Activated CD4-positive, alpha-beta memory T cell treated with anti-CD3 and anti-CD28 coated beads, Interleukin-2, amount 10 ng/mL, durations not matched to agents 7 days and 5 days (primary cell): ENCODE measurements at regions of chr15 and their contacts with region 1.

Region 1: DNA sequence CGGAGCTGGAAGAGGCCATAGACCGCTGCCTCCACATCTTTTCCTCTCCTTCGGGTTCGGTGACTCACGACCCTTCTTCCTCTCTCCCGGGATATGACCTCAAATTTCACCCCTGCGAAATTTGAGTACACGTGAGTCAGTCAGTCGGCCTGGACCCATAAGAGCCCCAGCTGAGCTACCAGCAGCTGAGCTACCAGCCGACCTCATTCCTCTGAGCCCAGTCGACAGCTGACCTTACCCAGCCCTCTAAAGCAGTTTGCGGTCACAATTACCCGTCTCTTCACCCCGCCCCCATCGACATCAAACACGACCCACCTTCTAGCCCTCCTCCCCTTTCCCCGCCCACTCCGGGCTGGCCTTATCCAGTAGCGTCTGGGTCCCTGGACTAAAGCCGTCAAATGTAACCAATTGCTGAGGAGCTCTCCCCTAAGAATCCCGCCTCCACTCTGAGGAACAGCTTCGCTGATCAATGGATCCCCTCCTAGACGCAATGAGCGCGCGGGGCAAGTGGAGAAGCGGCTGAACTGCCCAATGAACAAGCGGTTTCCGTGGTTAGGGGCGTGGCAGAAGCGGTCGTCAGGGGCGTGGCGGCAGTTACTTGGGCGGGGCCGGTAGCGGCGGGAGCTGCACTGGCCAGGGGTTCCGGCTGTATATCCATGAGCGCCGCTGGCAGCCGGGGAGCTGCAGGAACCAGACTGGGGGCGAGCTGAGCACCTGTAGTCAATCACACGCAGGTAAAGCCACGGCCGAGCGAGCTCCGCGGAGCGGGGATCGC is at the start of gene ABHD2:
- DNase-seq: peak; percentile 99
- H3K4me3 Mint-ChIP-seq: no peak within 1 kb of the TSS
- H3K27ac Mint-ChIP-seq: peak within 1 kb of the TSS; percentile 40
- H3K4me1 Mint-ChIP-seq: peaks cover 30% of the 10 kb centered on the region
- H3K27me3 Mint-ChIP-seq: no peaks in the 10 kb centered on the region
- total RNA-seq, gene ABHD2: 62.4 to 63.5 TPM

Region 2: GRCh38 chr15:89057504-89058133 is 30.4 kb before region 1 on chr15:
- CTCF ChIA-PET with region 1: interaction called, 19 read pairs
- POLR2A ChIA-PET with region 1: interaction called, 4 read pairs
- DNase-seq: peak; percentile 84
- H3K4me3 Mint-ChIP-seq: no peak overlapping the region
- H3K27ac Mint-ChIP-seq: no peak overlapping the region
- H3K4me1 Mint-ChIP-seq: peaks cover 8% of the 10 kb centered on the region
- H3K27me3 Mint-ChIP-seq: peaks cover 3% of the 10 kb centered on the region

Region 3: DNA sequence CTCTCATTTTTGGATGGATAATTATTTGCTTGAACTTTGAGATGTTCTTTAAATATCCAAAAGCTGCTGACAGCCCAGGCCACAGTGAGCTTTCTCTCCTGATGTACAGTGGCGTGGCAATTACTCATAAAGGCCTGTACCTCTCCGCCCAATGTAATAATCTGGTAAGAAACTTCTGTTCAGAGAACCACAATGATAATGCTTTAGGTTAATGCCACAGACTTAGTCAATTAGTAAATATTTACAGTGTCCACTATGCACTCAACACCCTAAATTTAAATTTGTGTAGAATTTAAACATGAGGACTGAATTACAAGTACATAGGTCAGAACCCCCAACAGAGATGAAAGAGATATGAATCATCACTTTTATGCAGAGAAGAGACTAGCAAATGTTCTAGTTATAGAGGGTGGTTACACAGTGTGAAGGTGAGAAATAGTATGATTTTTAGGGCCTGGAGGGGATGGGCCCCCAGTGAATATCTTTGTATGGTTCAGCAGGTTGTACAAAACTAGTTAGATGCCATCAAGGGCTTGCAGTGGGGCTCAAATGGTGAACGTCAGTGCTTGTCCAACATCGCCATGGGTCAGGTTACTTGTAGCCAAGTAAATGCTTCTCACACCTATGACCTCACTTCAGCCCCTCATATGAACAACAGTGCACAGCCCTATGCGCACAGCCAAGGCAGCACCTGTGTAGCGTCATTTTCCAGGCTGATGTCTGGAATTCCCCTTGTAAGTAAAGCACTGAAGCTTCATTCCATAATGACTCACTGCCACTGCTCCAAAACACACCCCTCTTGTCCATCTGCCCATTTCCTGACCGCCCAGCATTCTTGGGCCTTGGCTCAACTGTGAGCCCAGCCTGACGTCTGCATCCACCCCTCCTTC is 13.5 kb after region 1 on chr15:
- CTCF ChIA-PET with region 1: interaction called, 9 read pairs
- POLR2A ChIA-PET with region 1: interaction called, 28 read pairs
- DNase-seq: no peak
- H3K4me3 Mint-ChIP-seq: no peak overlapping the region
- H3K27ac Mint-ChIP-seq: no peak overlapping the region
- H3K4me1 Mint-ChIP-seq: peaks cover 13% of the 10 kb centered on the region
- H3K27me3 Mint-ChIP-seq: no peaks in the 10 kb centered on the region

Region 4: DNA sequence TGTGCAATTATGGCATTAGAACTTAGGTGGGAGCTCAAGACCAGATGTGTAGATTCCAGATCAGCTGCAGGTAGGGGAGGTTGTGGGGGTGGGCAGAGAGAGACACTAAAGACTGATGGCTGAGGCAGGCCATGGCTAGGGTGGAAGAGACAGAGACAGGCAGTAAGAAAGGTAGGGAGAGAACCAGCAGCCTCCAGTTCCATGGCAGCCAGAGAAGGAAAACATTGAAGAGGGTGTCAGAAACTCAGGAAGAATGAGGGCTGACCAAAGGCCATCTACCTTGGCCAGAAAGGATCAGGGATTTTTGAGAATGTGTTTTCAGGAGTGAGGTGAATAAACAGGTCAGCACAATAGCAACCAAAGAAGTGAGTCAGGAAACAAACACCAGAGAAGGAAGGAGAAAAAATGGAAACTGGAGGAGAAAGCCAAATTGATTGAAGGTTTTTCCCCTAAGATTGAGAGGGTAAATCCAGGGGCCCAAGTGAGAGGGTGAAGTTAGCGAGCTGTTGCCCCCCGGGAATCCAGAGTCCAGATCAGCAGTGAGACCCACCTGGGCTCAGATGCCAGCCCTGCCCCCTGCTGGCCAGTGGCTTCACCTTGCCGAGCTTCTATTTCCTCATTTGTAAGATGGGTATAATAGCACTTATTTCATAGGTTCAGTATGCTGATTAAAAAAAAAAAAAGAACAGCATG is 41.3 kb after region 1 on chr15:
- CTCF ChIA-PET with region 1: interaction called, 21 read pairs
- POLR2A ChIA-PET with region 1: interaction called, 9 read pairs
- DNase-seq: peak; percentile 56
- H3K4me3 Mint-ChIP-seq: no peak overlapping the region
- H3K27ac Mint-ChIP-seq: no peak overlapping the region
- H3K4me1 Mint-ChIP-seq: peaks cover 37% of the 10 kb centered on the region
- H3K27me3 Mint-ChIP-seq: no peaks in the 10 kb centered on the region

Region 5: GRCh38 chr15:89177633-89178306 is 89.8 kb after region 1 on chr15:
- CTCF ChIA-PET with region 1: interaction called, 46 read pairs
- POLR2A ChIA-PET with region 1: interaction called, 5 read pairs
- DNase-seq: peak; percentile 72
- H3K4me3 Mint-ChIP-seq: no peak overlapping the region
- H3K27ac Mint-ChIP-seq: no peak overlapping the region
- H3K4me1 Mint-ChIP-seq: peaks cover 17% of the 10 kb centered on the region
- H3K27me3 Mint-ChIP-seq: no peaks in the 10 kb centered on the region

Region 6: DNA sequence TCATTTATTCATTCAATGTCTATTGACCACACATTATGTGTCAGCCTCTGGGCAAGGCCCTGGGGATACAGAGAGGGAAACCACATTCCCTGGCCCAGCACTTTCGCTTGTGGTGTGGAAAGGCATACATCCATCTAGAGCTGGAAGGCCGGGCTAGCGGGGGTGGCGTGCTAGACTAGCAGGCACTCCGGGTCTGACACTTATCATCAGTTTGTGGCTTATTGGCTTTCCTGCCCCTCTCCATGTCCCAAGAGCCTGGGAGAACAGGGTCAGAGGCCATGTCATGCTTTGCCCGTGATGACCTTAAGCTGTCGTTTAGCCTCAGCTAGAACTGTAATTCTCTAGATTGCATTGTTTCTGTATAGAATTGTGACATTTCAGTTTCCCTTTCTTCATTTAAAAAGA is 297.9 kb after region 1 on chr15:
- CTCF ChIA-PET with region 1: no interaction called
- POLR2A ChIA-PET with region 1: no interaction called
- DNase-seq: no peak
- H3K4me3 Mint-ChIP-seq: no peak overlapping the region
- H3K27ac Mint-ChIP-seq: no peak overlapping the region
- H3K4me1 Mint-ChIP-seq: no peaks in the 10 kb centered on the region
- H3K27me3 Mint-ChIP-seq: peaks cover 29% of the 10 kb centered on the region

Region 7: DNA sequence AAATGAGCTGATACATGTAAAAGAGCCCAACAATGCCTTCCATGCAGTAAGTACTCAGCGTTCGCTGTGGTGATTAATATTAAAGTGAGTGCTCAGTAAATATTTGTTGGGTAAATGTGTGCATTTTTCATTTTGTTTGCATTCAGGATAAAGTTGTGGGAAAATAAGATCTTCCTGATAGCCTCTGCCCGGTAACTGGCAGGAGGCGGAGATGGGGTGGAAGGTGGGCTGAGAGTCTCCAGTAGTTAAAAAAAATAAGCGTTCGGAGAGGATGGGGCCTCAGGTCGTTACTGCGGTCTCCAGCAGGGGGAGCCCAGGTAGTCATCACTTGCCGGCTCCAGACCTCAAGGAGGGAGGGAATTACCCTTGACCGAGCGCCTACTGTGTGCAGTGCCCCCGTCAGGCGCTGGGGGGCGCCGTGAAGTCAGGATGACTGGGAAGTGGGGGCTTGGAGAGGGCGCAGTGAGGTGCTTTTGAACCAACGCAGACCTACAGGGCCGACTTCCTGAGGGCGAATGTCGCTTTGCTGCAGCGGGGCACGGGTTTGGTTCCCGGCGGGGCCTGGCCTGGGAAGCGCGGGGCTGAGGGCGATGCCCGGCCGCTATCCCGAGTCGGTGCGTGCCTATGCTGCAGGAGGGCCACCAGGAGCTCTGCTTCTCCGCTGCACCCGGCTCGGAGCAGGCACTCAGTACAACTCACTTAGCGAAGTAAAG is 328.3 kb after region 1 on chr15:
- CTCF ChIA-PET with region 1: no interaction called
- POLR2A ChIA-PET with region 1: no interaction called
- DNase-seq: peak; percentile 82
- H3K4me3 Mint-ChIP-seq: no peak overlapping the region
- H3K27ac Mint-ChIP-seq: no peak overlapping the region
- H3K4me1 Mint-ChIP-seq: peaks cover 13% of the 10 kb centered on the region
- H3K27me3 Mint-ChIP-seq: peaks cover 79% of the 10 kb centered on the region

Region 8: GRCh38 chr15:89430530-89431341 is 342.7 kb after region 1 on chr15:
- CTCF ChIA-PET with region 1: no interaction called
- POLR2A ChIA-PET with region 1: no interaction called
- DNase-seq: peak; percentile 85
- H3K4me3 Mint-ChIP-seq: peak overlapping the region; percentile 59
- H3K27ac Mint-ChIP-seq: no peak overlapping the region
- H3K4me1 Mint-ChIP-seq: peaks cover 4% of the 10 kb centered on the region
- H3K27me3 Mint-ChIP-seq: peaks cover 34% of the 10 kb centered on the region

Region 9: DNA sequence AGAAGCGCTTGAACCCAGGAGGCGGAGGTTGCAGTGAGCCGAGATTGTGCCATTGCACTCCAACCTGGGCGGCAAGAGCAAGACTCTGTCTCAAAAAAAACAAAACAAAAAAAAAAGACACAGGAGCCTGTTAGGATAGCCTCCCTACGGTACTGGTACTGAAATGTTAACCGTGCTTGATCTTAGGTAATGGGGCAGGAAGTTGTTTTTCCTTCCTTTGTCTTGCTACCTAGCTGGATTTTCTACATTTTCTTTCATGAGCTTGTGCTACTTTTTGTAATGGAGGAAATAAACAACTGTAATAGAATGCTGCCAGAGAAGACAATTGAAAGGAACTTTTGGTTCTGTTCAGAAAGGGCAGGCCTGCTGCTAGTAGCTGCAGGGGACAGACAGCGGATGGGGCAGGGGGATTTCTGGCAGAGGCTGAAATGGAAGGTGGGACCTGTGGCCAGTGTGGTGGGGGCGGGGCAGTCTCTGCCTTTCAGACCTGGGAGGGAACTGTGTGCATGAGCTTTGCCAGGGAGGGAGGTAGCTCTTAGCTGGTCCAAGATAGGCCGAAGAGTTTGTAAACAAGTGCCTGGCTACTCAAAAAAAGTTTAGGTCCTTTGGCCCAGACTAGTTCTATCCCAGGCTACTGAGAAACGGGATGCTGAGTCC is 1064.1 kb after region 1 on chr15:
- CTCF ChIA-PET with region 1: no interaction called
- POLR2A ChIA-PET with region 1: no interaction called
- DNase-seq: no peak
- H3K4me3 Mint-ChIP-seq: no peak overlapping the region
- H3K27ac Mint-ChIP-seq: no peak overlapping the region
- H3K4me1 Mint-ChIP-seq: peaks cover 12% of the 10 kb centered on the region
- H3K27me3 Mint-ChIP-seq: no peaks in the 10 kb centered on the region